Dendritic cell treated with granulocyte-macrophage colony-stimulating factor and Interleukin-4, amounts not matched to agents 40 ng/mL and 50 ng/mL, for 4 days (primary cell): ENCODE measurements at regions of chr21 and their contacts with region 1.

Region 1: GRCh38 chr21:36135391-36136102 is 668 bp downstream of the CBR3 start:
- H3K4me3 Mint-ChIP-seq: peak overlapping the region; percentile 81
- H3K27ac Mint-ChIP-seq: peak overlapping the region; percentile 92
- H3K4me1 Mint-ChIP-seq: peaks cover 50% of the 10 kb centered on the region
- H3K27me3 Mint-ChIP-seq: peaks cover 2% of the 10 kb centered on the region

Region 2: GRCh38 chr21:36149788-36150711 is 14.5 kb after region 1 on chr21:
- intact Hi-C with region 1: loop called (anchors 2 kb)
- H3K4me3 Mint-ChIP-seq: peak overlapping the region; percentile 56
- H3K27ac Mint-ChIP-seq: peak overlapping the region; percentile 90
- H3K4me1 Mint-ChIP-seq: peaks cover 37% of the 10 kb centered on the region
- H3K27me3 Mint-ChIP-seq: no peaks in the 10 kb centered on the region